ENCODE measurements at regions of chr1 and their contacts with region 1.

Region 1: GRCh38 chr1:189859385-189859977 is 618.2 kb downstream of the BRINP3 start:
- DNase-seq: peak; percentile 35 to 59
- H3K4me3 ChIP-seq: no peak overlapping the region
- H3K4me3 Mint-ChIP-seq: no peak overlapping the region
- H3K27ac Mint-ChIP-seq: no peak overlapping the region
- H3K4me1 ChIP-seq: no peaks in the 10 kb centered on the region
- H3K4me1 Mint-ChIP-seq: no peaks in the 10 kb centered on the region
- H3K27me3 ChIP-seq: no peaks in the 10 kb centered on the region
- H3K27me3 Mint-ChIP-seq: peaks cover 2% of the 10 kb centered on the region
- CTCF ChIP-seq: peak; percentile 57 to 76

Region 2: GRCh38 chr1:190124074-190124473 is 264.6 kb after region 1 on chr1:
- CTCF ChIA-PET with region 1: no interaction called
- POLR2A ChIA-PET with region 1: no interaction called
- intact Hi-C with region 1: loop called (anchors 1 kb)
- DNase-seq: peak in 1 of 2 experiments; percentile 13
- H3K4me3 ChIP-seq: no peak overlapping the region
- H3K4me3 Mint-ChIP-seq: no peak overlapping the region
- H3K27ac Mint-ChIP-seq: no peak overlapping the region
- H3K4me1 ChIP-seq: no peaks in the 10 kb centered on the region
- H3K4me1 Mint-ChIP-seq: no peaks in the 10 kb centered on the region
- H3K27me3 ChIP-seq: no peaks in the 10 kb centered on the region
- H3K27me3 Mint-ChIP-seq: no peaks in the 10 kb centered on the region
- CTCF ChIP-seq: peak in 1 of 2 experiments; percentile 69

Region 3: DNA sequence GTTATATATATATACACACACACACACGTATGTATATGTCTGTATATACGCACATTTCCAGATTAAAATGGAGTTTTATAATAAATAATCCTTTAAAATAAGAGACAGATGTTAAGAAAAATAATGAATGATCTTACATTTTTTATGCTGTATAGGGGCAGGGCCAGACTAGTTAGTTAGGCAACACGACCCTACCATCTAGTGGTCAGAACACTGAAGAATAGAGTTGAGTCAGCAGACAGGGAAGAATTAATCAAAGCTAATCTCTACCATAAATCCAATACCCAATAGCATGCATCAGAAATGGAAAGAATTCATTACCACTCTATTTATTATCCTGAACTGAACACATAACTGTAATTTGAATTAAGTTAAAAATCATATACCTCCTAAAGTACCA is 461.5 kb after region 1 on chr1:
- CTCF ChIA-PET with region 1: no interaction called
- POLR2A ChIA-PET with region 1: no interaction called
- intact Hi-C with region 1: loop called (anchors 1 kb)
- DNase-seq: peak in 1 of 2 experiments; percentile 4
- H3K4me3 ChIP-seq: no peak overlapping the region
- H3K4me3 Mint-ChIP-seq: no peak overlapping the region
- H3K27ac Mint-ChIP-seq: no peak overlapping the region
- H3K4me1 ChIP-seq: no peaks in the 10 kb centered on the region
- H3K4me1 Mint-ChIP-seq: no peaks in the 10 kb centered on the region
- H3K27me3 ChIP-seq: no peaks in the 10 kb centered on the region
- H3K27me3 Mint-ChIP-seq: no peaks in the 10 kb centered on the region
- CTCF ChIP-seq: peak in 1 of 2 experiments; percentile 45

Measured in Caco-2 (cell line).